Panc1 (cell line): ENCODE measurements at regions of chr1 and their contacts with region 1.

Region 1: GRCh38 chr1:201859424-201859823 is 29.3 kb upstream of the SHISA4 start:
- DNase-seq: no peak
- ATAC-seq: no peak
- H3K4me3 ChIP-seq: no peak overlapping the region
- H3K27ac ChIP-seq: no peak overlapping the region
- H3K4me1 ChIP-seq: no peaks in the 10 kb centered on the region
- H3K27me3 ChIP-seq: no peaks in the 10 kb centered on the region
- CTCF ChIP-seq: no peak

Region 2: DNA sequence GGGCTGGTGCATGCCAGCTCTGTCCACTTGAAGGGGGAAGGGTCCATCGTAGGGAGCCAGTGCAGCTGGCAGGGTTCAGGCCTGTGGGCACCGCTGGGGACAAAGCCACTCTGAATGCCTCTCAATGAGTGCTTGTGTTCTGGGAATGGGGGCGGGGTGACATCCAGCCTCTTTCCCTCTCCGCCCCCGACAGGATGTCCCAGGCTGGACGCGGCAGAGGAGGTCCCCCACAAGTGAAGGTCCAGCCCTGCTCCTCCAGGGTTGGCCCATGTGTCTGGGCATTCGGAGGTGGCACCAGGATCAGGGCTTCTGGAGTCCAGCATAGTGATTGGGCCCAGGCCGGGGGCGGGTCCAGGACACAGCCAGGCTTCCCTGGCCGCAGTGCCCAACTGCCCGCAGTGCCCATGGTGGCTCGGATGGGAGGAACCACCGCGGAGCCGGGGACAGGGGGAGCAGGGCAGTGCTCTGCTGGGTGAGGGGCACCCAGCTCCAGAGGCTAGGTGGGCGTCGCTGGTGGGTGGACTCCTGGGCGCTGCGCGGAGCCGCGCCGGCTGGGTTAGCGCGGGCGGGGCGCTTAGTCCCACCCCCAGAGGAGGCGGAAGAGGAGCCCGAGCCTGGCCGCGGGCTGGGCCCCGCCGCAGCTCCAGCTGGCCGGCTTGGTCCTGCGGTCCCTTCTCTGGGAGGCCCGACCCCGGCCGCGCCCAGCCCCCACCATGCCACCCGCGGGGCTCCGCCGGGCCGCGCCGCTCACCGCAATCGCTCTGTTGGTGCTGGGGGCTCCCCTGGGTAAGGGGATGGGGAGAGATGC is 29.1 kb after region 1 on chr1 and contains the start of gene SHISA4:
- CTCF ChIA-PET with region 1: no interaction called
- POLR2A ChIA-PET with region 1: interaction called, 16 read pairs
- in situ Hi-C with region 1: no loop called
- intact Hi-C with region 1: no loop called
- DNase-seq: no peak
- ATAC-seq: peak; percentile 94
- H3K4me3 ChIP-seq: peak within 1 kb of the TSS; percentile 71 to 79
- H3K27ac ChIP-seq: peak within 1 kb of the TSS; percentile 71
- H3K4me1 ChIP-seq: peaks cover 10% of the 10 kb centered on the region
- H3K27me3 ChIP-seq: no peaks in the 10 kb centered on the region
- CTCF ChIP-seq: no peak
- total RNA-seq, gene SHISA4: 38.2 TPM

Region 3: DNA sequence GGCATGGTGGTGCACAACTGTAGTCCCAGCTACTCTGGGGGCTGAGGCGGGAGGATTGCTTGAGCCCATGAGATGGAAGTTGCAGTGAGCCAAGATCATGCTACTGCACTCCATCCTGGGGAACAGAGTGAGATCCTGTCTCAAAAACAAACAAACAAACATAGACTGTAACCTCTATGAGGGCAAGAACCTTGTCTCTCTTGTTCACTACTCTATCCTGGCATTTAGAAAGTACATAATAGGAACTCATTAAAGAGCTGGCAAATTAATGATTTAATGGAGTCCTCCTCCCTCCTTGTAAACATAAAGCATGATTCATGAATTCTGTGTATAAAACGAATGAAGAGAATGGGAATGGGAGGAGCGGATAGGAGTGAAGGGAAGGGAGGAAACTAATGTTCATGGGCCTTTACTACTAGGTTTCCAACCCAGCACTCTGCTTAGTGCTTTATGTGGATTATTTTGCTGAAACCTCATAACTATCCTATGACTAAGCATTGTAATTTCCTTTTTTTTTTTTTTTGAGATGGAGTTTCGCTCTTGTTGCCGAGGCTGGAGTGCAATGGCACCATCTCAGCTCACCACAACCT is 78.3 kb after region 1 on chr1:
- CTCF ChIA-PET with region 1: no interaction called
- POLR2A ChIA-PET with region 1: no interaction called
- in situ Hi-C with region 1: no loop called
- intact Hi-C with region 1: no loop called
- DNase-seq: no peak
- ATAC-seq: no peak
- H3K4me3 ChIP-seq: no peak overlapping the region
- H3K27ac ChIP-seq: no peak overlapping the region
- H3K4me1 ChIP-seq: no peaks in the 10 kb centered on the region
- H3K27me3 ChIP-seq: peaks cover 2% of the 10 kb centered on the region; the same call in 1 of the 2 replicates
- CTCF ChIP-seq: no peak

Region 4: DNA sequence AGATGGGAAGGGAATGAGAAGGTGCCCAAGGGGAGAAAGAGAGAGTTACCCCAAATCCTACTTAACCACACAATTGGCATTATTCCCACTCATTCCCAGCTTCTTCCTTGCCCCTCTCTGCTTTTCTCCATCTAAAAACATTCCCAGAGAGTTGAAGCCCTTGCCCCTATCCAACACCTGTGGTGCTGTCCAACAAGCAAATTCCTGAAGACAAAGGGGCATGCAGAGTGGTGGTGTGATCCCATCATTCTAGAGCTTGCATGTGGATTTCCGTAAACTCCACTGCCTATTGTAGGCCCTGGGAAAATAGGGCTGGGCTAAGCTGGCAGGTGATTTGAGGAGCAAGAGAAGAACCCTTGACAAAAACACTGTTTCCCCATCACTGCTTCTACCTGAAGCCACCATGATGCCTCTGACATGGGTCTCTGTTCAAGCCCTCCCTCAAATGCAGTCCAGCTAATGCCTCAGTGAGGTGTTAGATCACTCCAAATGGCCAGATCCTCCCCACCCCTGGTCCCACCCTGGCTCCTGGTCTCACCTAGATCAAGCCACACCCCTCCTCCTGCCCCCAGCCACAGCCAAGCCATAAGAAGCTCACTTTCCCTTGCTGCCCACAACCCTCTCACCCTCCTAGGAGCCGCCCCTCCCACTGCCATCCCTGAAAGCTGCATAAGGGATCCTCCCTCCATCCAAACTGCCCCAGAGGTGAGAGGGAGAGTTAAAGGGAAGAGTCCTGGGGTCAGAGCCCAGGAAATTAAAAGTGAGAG is 821.3 kb after region 1 on chr1:
- CTCF ChIA-PET with region 1: no interaction called
- POLR2A ChIA-PET with region 1: no interaction called
- in situ Hi-C with region 1: no loop called
- intact Hi-C with region 1: no loop called
- DNase-seq: no peak
- ATAC-seq: no peak
- H3K4me3 ChIP-seq: no peak overlapping the region
- H3K27ac ChIP-seq: no peak overlapping the region
- H3K4me1 ChIP-seq: no peaks in the 10 kb centered on the region
- H3K27me3 ChIP-seq: peaks cover 9% of the 10 kb centered on the region
- CTCF ChIP-seq: no peak